Esophagus squamous epithelium (tissue), 5 donors: ENCODE measurements at regions of chr6 and their contacts with region 1.

Region 1: DNA sequence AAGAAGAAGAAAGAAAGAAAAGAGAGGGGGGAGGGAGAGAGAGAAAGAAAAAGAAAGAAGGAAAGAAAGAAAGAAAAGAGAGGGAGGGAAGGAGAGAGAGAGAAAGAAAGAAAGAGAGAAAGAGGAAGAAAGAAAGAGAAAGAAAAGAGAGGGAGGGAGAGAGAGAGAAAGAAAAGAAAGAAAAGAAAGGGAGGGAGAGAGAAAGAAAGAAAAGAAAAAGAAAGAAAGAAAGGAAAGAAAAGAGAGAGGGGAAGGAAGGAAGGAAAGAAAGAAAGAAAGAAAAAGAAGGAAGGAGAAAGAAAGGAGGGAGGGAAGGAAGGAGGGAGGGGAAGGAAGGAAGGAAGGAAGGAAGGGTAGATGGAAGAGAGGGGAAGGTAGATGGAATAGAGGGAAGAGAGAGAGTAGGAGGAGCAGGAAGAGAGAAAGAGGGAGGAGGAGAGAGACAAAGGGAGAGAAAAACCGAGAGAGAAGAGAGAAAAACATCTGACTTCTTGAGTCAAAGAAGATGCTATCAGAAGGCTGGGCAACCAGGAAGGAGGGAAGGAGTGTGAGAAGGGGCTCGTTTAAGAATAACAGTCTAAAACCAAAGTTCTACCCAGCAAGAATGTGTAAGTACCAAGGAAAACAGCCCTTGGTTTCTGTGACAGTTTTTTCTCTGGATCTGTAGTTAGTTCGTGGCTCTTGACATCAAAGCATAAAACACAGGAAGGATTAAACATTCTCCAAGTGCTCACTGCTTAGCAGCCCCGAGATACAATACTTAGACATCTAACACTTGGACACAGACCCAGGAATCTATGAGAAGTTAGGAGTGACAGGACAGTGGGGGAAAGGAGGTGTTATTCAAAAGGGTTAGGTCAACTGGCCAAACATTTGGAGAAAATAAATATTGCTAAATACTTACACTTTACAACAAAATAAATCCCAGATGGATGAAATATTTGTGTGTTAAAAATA is 131.9 kb upstream of the STMND1 start:
- DNase-seq: no peak
- H3K4me3 ChIP-seq: no peak overlapping the region
- H3K27ac ChIP-seq: no peak overlapping the region
- H3K4me1 ChIP-seq: peaks cover 1 to 2% (median 2%) of the 10 kb centered on the region in 3 donors
- H3K27me3 ChIP-seq: peaks cover 0 to 15% (median 0%) of the 10 kb centered on the region in 4 donors
- CTCF ChIP-seq: no peak
- POLR2A ChIP-seq: no peak

Region 2: GRCh38 chr6:15491255-15491985 is 1478.6 kb before region 1 on chr6:
- intact Hi-C with region 1: no loop called
- DNase-seq: no peak
- H3K4me3 ChIP-seq: no peak overlapping the region
- H3K27ac ChIP-seq: peak overlapping the region in 3 of 4 donors; percentile 4 to 54 (median 36)
- H3K4me1 ChIP-seq: peaks cover 0 to 38% (median 4%) of the 10 kb centered on the region in 3 donors
- H3K27me3 ChIP-seq: no peaks in the 10 kb centered on the region
- CTCF ChIP-seq: peak; percentile 70 to 94 (median 88)
- POLR2A ChIP-seq: no peak

Region 3: DNA sequence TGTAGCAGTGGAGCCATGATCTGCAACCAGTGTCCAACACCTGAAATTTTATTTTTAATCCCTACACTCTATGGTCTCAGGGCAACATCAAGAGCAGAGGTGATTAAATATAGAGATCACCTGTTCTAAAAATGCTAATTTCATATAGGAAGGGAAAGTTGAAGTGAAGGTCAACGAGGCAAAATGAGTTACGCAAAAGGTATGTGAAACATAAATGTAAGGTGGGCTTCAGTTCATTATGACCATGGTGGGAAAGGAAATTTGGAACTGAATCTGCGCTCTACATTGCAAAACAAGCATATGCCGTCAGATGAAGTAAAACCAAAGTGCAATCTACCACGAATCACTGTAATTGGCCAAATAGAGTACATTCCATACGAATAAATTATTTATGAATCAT is 96.6 kb after region 1 on chr6:
- intact Hi-C with region 1: loop called (anchors 10 kb)
- DNase-seq: no peak
- H3K4me3 ChIP-seq: no peak overlapping the region
- H3K27ac ChIP-seq: no peak overlapping the region
- H3K4me1 ChIP-seq: peaks cover 0 to 10% (median 0%) of the 10 kb centered on the region in 3 donors
- H3K27me3 ChIP-seq: no peaks in the 10 kb centered on the region
- CTCF ChIP-seq: no peak
- POLR2A ChIP-seq: no peak